Psoas muscle (tissue), 8 donors: ENCODE measurements at regions of chr22 and their contacts with region 1.

Region 1: GRCh38 chr22:20989323-20990138 is 7.4 kb downstream of the LZTR1 start:
- DNase-seq: no peak
- ATAC-seq: no peak
- H3K4me3 ChIP-seq: no peak overlapping the region
- H3K27ac ChIP-seq: no peak overlapping the region
- H3K4me1 ChIP-seq: no peaks in the 10 kb centered on the region
- H3K27me3 ChIP-seq: no peaks in the 10 kb centered on the region
- CTCF ChIP-seq: no peak

Region 2: DNA sequence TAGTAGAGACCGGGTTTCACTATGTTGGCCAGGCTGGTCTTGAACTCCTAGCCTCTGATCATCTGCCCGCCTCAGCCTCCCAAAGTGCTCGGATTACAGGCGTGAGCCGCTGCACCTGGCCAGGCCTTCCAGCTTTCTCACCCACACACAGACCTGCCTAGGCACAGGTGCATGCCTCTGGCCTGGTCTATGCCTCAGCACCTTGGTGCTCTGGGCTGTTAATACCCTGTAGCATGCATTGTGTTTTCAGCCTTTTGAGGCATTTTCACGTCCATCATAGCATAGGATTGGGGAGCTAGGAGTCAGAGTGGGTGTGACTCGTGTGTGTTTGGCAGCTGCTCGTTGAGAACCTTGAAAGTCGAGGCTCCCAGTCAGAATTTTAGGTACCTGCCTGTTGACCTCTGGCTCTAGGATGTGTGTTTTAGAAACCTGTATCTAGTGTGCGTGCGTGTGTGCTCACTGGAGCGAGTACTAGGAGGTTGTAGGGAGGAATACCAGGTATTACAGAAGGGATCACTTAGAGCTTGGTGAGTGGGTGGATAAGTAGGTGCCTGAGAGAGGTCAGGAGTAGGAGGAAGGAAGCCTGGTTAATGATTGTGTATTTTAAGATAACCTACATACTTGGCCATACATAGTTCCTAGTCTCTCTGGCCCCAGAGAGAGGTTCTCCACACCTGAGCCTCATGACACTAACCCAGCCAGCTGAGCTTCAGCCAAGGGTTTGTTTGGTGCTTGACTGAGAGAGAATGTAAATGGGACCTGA is 52.3 kb before region 1 on chr22:
- intact Hi-C with region 1: loop called in 1 of 2 experiments (anchors 5 kb)
- DNase-seq: no peak
- ATAC-seq: peak; percentile 19 to 57 (median 31)
- H3K4me3 ChIP-seq: peak overlapping the region; percentile 5
- H3K27ac ChIP-seq: no peak overlapping the region
- H3K4me1 ChIP-seq: peaks cover 41% of the 10 kb centered on the region
- H3K27me3 ChIP-seq: no peaks in the 10 kb centered on the region
- CTCF ChIP-seq: no peak

Region 3: DNA sequence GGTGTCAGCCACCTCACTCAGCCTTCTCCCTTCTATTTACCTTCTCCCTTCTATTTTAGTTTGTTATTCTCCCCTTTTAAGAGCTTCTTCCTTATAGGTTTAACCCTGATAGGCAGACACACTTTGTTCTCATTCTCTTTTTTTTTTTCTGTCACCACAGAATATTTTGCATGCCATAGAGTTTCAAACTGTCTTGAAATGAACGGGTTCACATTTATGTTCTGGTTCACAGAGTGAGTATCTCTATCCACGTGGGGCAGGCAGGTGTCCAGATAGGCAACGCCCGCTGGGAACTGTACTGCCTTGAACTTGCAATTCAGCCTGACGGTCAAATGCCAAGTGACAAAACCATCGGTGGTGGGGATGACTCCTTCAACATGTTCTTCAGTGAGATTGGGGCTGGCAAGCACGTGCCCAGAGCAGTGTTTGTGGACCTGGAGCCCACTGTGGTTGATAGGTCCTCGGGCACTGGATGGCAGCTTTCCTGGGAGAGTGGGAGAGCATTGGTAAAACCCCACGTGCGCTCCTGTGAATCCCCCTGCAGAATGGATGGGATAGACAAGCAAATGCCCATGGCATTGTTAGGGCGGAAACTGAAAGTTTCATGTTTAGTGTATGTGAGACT is 75.8 kb after region 1 on chr22:
- intact Hi-C with region 1: loop called in 1 of 2 experiments (anchors 10 kb)
- DNase-seq: no peak
- ATAC-seq: no peak
- H3K4me3 ChIP-seq: no peak overlapping the region
- H3K27ac ChIP-seq: no peak overlapping the region
- H3K4me1 ChIP-seq: no peaks in the 10 kb centered on the region
- H3K27me3 ChIP-seq: no peaks in the 10 kb centered on the region
- CTCF ChIP-seq: no peak